ENCODE measurements at regions of chr16 and their contacts with region 1.

Region 1: DNA sequence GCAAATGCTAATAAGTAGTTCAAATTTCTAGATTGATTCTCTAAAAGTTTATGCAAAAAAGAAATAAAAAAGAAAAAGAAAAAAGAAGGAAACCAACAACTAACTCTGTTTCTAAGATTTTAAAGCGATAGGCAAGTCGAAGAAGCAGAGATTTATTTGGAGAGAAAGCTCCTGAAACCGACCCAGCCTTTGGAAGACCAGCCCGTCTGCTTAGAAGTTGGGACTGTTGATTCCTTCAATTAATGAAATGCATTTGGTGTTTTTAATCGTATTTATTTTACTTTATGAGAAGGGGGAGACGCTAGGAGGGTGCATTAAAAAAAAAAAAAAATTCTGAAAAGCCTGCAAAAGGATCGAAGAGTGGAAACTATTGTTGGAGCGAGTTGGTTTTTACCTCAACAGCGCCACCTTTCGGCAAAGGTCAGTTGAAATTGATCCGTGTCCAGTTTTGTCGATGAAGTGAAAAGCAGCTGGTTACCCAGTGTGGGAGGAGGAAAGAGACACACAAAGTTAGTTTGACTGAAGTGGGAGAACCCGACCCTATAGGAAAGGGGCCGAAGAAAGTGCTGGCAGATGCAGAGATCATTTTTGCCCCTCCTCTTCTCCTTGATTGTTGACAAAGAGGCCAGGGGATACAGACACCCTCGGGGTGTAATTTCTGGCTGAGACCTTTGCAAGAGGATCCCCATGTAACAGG is 1.5 kb upstream of the MAF start:
- DNase-seq: peak; percentile 55
- ATAC-seq: no peak
- H3K4me3 ChIP-seq: no peak overlapping the region
- H3K27ac ChIP-seq: no peak overlapping the region
- H3K4me1 ChIP-seq: no peaks in the 10 kb centered on the region
- H3K27me3 ChIP-seq: peaks cover 69% of the 10 kb centered on the region
- CTCF ChIP-seq: peak; percentile 73

Region 2: GRCh38 chr16:78122774-78123315 is 1479.2 kb before region 1 on chr16:
- CTCF ChIA-PET with region 1: interaction called, 5 read pairs
- POLR2A ChIA-PET with region 1: no interaction called
- intact Hi-C with region 1: loop called (anchors 10 kb)
- DNase-seq: peak; percentile 72
- ATAC-seq: peak; percentile 86
- H3K4me3 ChIP-seq: no peak overlapping the region
- H3K27ac ChIP-seq: no peak overlapping the region
- H3K4me1 ChIP-seq: peaks cover 3% of the 10 kb centered on the region; the same call in 1 of the 2 replicates
- H3K27me3 ChIP-seq: no peaks in the 10 kb centered on the region
- CTCF ChIP-seq: peak; percentile 61